Activated B cell treated with CpG ODN at 0.5 μM for 24 hours (primary cell): ENCODE measurements at regions of chr17 and their contacts with region 1.

Region 1: GRCh38 chr17:30124273-30124796 is 7.7 kb downstream of the NSRP1 start:
- DNase-seq: no peak
- ATAC-seq: no peak
- H3K4me3 Mint-ChIP-seq: no peak overlapping the region
- H3K27ac Mint-ChIP-seq: no peak overlapping the region
- H3K4me1 Mint-ChIP-seq: peaks cover 37% of the 10 kb centered on the region
- H3K27me3 Mint-ChIP-seq: no peaks in the 10 kb centered on the region
- CTCF ChIP-seq: no peak

Region 2: GRCh38 chr17:29883497-29883896 is 240.8 kb before region 1 on chr17:
- CTCF ChIA-PET with region 1: no interaction called
- POLR2A ChIA-PET with region 1: no interaction called
- intact Hi-C with region 1: no loop called
- DNase-seq: no peak
- ATAC-seq: no peak
- H3K4me3 Mint-ChIP-seq: no peak overlapping the region
- H3K27ac Mint-ChIP-seq: no peak overlapping the region
- H3K4me1 Mint-ChIP-seq: peaks cover 46% of the 10 kb centered on the region
- H3K27me3 Mint-ChIP-seq: no peaks in the 10 kb centered on the region
- CTCF ChIP-seq: no peak

Region 3: GRCh38 chr17:29972277-29972676 is 152.1 kb before region 1 on chr17:
- CTCF ChIA-PET with region 1: no interaction called
- POLR2A ChIA-PET with region 1: no interaction called
- intact Hi-C with region 1: no loop called
- DNase-seq: no peak
- ATAC-seq: no peak
- H3K4me3 Mint-ChIP-seq: no peak overlapping the region
- H3K27ac Mint-ChIP-seq: no peak overlapping the region
- H3K4me1 Mint-ChIP-seq: peaks cover 7% of the 10 kb centered on the region
- H3K27me3 Mint-ChIP-seq: no peaks in the 10 kb centered on the region
- CTCF ChIP-seq: no peak

Region 4: DNA sequence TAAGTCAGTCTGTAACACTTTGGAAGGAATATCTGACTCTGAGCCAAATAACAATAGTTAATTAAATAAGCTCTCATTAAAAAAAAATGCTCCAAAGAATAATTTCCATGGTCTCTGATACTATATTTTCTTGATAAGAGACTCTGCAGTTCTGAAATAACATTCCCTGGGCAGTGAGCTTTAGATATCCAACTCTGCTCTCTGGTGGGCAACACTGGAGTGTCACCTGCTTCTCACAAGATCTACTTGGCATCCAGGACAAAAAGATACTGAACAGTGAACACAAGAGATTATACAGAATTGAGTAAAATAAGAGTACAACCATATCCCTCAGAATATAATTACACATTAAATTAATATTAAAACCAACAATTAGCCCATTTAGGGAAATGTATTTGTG is 153.7 kb after region 1 on chr17:
- CTCF ChIA-PET with region 1: interaction called, 10 read pairs
- POLR2A ChIA-PET with region 1: no interaction called
- intact Hi-C with region 1: loop called (anchors 1 kb)
- DNase-seq: no peak
- ATAC-seq: no peak
- H3K4me3 Mint-ChIP-seq: no peak overlapping the region
- H3K27ac Mint-ChIP-seq: no peak overlapping the region
- H3K4me1 Mint-ChIP-seq: peaks cover 4% of the 10 kb centered on the region
- H3K27me3 Mint-ChIP-seq: no peaks in the 10 kb centered on the region
- CTCF ChIP-seq: no peak

Region 5: DNA sequence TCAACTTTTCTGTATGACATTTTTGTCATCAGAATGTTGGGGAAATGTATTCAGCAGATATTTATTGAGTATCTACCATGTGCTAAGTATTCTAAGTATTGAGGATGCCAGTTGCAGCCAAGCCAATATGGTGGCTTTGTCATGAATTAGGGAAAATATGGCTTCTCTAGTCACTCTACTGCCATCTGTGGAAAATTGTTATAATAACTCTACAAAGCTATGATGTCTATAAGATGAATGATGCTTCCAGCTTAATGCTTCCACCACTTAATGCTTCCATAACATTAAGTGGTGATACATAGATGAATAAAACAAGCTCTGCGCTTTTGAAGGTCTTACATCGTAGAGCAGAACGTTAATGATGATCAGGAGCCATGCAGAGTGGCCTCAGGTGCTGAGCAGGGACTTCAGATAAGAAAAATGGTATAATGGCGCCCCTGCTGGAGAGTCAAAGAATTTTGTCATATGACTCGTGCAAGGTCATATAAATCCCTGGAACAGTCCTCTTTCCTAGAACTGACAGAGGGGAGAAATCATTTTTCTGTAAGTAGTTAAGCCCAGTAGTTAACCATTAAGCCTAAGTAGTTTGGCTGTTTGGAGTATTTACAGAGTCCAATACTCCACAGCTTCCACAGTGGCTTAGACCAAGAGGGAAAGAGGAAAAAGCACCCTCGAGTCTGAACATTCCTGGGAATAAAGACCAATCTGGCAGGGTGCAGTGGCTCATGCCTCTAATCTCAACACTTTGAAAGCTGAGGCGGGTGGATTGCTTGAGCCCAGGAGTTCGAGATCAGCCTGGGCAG is 212.2 kb after region 1 on chr17:
- CTCF ChIA-PET with region 1: interaction called, 65 read pairs
- POLR2A ChIA-PET with region 1: no interaction called
- intact Hi-C with region 1: loop called (anchors 1 kb)
- DNase-seq: no peak
- ATAC-seq: peak; percentile 51
- H3K4me3 Mint-ChIP-seq: no peak overlapping the region
- H3K27ac Mint-ChIP-seq: no peak overlapping the region
- H3K4me1 Mint-ChIP-seq: peaks cover 19% of the 10 kb centered on the region
- H3K27me3 Mint-ChIP-seq: peaks cover 6% of the 10 kb centered on the region
- CTCF ChIP-seq: peak; percentile 32

Region 6: GRCh38 chr17:30716461-30717300 is 592.3 kb after region 1 on chr17:
- CTCF ChIA-PET with region 1: no interaction called
- POLR2A ChIA-PET with region 1: no interaction called
- intact Hi-C with region 1: loop called (anchors 10 kb)
- DNase-seq: no peak
- ATAC-seq: no peak
- H3K4me3 Mint-ChIP-seq: no peak overlapping the region
- H3K27ac Mint-ChIP-seq: no peak overlapping the region
- H3K4me1 Mint-ChIP-seq: peaks cover 11% of the 10 kb centered on the region
- H3K27me3 Mint-ChIP-seq: no peaks in the 10 kb centered on the region
- CTCF ChIP-seq: no peak